ENCODE measurements at regions of chr5 and their contacts with region 1.

Region 1: GRCh38 chr5:131524431-131524830 is 110.6 kb downstream of the RAPGEF6 start:
- DNase-seq: no peak
- ATAC-seq: no peak
- H3K4me3 ChIP-seq: no peak overlapping the region
- H3K27ac ChIP-seq: no peak overlapping the region
- H3K4me1 ChIP-seq: no peaks in the 10 kb centered on the region
- H3K27me3 ChIP-seq: no peaks in the 10 kb centered on the region
- CTCF ChIP-seq: no peak

Region 2: DNA sequence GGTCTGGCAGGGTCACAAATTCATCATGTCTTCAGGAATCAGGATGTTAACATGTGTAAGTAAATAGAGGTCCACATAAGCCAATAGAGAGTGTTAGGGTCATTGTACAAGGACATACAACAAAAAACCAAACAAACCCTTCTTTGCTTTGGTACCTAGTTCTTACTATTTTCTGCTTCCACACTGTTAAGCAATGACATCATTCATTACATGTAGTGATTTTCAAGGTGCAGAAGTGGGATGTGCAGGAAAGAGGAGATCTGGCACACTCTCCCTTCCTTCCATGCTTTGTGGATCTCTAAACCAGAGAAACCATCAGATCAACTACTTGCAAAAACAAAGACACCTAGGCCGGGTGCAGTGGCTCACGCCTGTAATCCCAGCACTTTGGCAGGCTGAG is 73.5 kb before region 1 on chr5:
- CTCF ChIA-PET with region 1: no interaction called
- POLR2A ChIA-PET with region 1: interaction called, 11 read pairs
- in situ Hi-C with region 1: no loop called
- intact Hi-C with region 1: no loop called
- DNase-seq: no peak
- ATAC-seq: no peak
- H3K4me3 ChIP-seq: no peak overlapping the region
- H3K27ac ChIP-seq: no peak overlapping the region
- H3K4me1 ChIP-seq: no peaks in the 10 kb centered on the region
- H3K27me3 ChIP-seq: no peaks in the 10 kb centered on the region
- CTCF ChIP-seq: no peak

Measured in Panc1 (cell line).